OCI-LY7 (cell line): ENCODE measurements at regions of chr2 and their contacts with region 1.

Region 1: DNA sequence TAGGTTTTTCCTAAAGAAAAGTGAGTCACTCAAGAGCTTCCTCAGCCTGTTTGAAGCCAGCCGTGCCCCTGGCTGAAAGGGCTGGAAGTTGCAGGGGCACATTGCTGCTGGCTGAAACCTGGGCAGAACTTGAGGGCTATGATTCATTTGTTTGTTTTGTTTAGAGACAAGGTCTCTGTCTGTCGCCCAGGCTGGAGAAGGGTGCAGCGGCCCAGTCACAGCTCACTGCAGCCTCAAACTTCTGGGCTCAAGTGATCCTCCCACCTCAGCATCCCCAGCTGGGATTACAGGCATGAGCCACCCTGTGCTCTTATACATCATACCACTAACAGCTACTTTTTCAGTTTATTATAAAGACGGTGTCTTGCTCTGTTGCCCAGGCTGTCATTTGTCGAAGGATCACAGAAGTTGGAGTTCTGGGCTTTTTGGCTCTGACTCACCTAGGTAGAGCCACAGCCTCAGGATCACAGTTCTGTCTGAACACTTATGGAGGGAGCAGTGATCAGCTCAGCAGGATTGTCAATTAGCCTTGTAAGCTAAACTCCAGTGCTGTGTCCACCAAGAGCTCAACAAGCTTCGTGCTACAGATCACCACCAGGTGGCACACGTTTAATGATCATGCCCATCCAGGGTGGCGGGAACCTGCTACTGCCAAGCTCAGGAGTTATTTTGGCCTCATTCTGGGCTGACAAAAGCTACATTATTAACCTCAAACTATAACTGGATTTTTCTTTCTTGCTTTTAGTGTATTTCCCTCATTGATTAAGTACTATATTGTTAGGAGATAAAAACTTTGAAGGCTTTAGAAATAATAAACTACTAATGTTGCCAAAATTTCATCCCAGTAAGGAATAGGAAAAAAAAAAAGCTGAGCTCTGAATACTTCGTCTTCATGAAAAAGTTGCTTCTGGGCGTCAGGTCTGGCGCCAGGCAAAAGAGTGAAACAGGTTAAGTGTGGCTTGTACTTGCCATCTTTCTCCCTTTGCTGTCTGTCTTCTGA is 57.9 kb downstream of the ARHGEF33 start:
- DNase-seq: peak; percentile 84
- H3K4me3 ChIP-seq: no peak overlapping the region
- H3K27ac ChIP-seq: no peak overlapping the region
- H3K4me1 ChIP-seq: no peaks in the 10 kb centered on the region
- CTCF ChIP-seq: peak; percentile 90

Region 2: GRCh38 chr2:39059366-39059952 is 111.9 kb after region 1 on chr2:
- CTCF ChIA-PET with region 1: no interaction called
- POLR2A ChIA-PET with region 1: no interaction called
- intact Hi-C with region 1: loop called (anchors 5 kb)
- DNase-seq: peak; percentile 77
- H3K4me3 ChIP-seq: no peak overlapping the region
- H3K27ac ChIP-seq: no peak overlapping the region
- H3K4me1 ChIP-seq: no peaks in the 10 kb centered on the region
- CTCF ChIP-seq: peak; percentile 100

Region 3: DNA sequence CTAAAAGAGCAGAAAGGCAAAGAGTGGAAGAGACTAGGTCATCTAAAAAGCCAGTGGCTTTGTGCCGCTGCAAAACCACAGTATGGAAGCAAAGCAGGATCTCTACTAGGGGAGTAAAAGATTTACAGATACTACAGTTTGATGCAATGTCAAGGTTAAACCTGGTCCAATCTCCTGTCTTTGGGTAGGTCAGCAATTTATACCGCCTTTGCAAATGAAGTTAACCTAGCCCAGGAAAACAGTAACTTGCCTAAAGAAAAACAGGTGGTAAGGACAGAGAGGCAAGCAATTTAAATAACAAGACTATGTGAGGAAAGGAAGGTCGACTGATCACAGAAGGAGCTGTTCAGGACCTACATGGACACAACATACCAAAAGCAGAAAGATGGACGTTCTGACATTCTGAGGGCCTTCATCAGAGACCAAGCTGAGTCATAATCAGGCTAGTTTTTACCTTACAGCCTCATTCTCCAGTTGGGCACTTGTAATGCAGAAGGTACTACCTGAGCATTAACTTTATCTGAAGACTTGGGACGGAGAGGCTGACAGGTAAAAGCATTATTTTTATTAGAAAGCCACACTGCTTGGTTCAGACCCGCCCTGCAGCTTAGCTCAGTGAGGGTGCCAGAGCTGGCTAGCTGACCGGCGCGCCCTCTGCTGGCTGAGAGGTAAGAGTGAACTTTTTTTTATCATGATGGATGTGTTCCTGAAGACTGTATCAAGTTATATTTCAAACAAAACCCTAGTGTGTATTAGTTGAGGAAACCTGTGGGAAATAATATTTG is 280.3 kb after region 1 on chr2:
- CTCF ChIA-PET with region 1: interaction called, 31 read pairs
- POLR2A ChIA-PET with region 1: interaction called, 13 read pairs
- intact Hi-C with region 1: loop called (anchors 1 kb)
- DNase-seq: peak; percentile 69
- H3K4me3 ChIP-seq: peak overlapping the region; percentile 33
- H3K27ac ChIP-seq: no peak overlapping the region
- H3K4me1 ChIP-seq: peaks cover 7% of the 10 kb centered on the region
- CTCF ChIP-seq: peak; percentile 84

Region 4: DNA sequence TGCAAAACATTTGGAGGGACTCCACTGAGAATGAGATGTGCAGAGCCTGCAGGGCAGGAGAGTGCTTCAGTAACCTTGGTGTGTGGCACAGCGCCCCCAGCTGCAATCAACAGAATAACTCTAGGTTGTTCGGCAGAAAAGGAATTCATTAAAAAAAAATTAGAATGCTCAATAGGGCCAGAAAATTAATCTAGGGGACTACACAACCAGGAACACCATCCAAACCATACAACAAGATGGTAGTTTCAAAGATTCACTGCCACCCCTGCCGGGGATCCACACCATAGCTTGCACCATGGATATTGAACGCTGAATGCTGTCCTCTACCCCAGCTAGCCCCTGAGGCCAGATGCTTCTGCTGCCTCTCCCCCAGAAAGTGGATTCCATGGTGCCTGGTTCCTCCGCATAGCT is 781.4 kb after region 1 on chr2:
- CTCF ChIA-PET with region 1: no interaction called
- POLR2A ChIA-PET with region 1: no interaction called
- intact Hi-C with region 1: loop called (anchors 10 kb)
- DNase-seq: peak; percentile 59
- H3K4me3 ChIP-seq: no peak overlapping the region
- H3K27ac ChIP-seq: no peak overlapping the region
- H3K4me1 ChIP-seq: no peaks in the 10 kb centered on the region
- CTCF ChIP-seq: peak; percentile 91